ENCODE measurements at regions of chr1 and their contacts with region 1.

Region 1: GRCh38 chr1:223556414-223557129 is 108.9 kb downstream of the CAPN8 start:
- DNase-seq: peak; percentile 59
- ATAC-seq: peak; percentile 88
- H3K4me3 ChIP-seq: no peak overlapping the region
- H3K27ac ChIP-seq: no peak overlapping the region
- H3K4me1 ChIP-seq: peaks cover 3% of the 10 kb centered on the region
- H3K27me3 ChIP-seq: no peaks in the 10 kb centered on the region
- CTCF ChIP-seq: peak; percentile 71 to 85 (median 83)
- EP300 ChIP-seq: peak in 1 of 2 experiments; percentile 79; a peak in 1 of 4 replicates
- POLR2A ChIP-seq: no peak
- RAD21 ChIP-seq: peak; percentile 78

Region 2: GRCh38 chr1:223500560-223501425 is 55.8 kb before region 1 on chr1:
- CTCF ChIA-PET with region 1: no interaction called
- POLR2A ChIA-PET with region 1: no interaction called
- RAD21 ChIA-PET with region 1: no interaction called
- SMC1A ChIA-PET with region 1: no interaction called
- in situ Hi-C with region 1: no loop called
- intact Hi-C with region 1: no loop called
- DNase-seq: no peak
- ATAC-seq: no peak
- H3K4me3 ChIP-seq: no peak overlapping the region
- H3K27ac ChIP-seq: no peak overlapping the region
- H3K4me1 ChIP-seq: no peaks in the 10 kb centered on the region
- H3K27me3 ChIP-seq: no peaks in the 10 kb centered on the region
- CTCF ChIP-seq: no peak
- EP300 ChIP-seq: no peak
- POLR2A ChIP-seq: no peak
- RAD21 ChIP-seq: no peak

Region 3: GRCh38 chr1:223538981-223539380 is 17.6 kb before region 1 on chr1:
- CTCF ChIA-PET with region 1: interaction called, 16 read pairs
- POLR2A ChIA-PET with region 1: interaction called, 12 read pairs
- RAD21 ChIA-PET with region 1: interaction called, 14 read pairs
- SMC1A ChIA-PET with region 1: interaction called, 13 read pairs
- in situ Hi-C with region 1: no loop called
- intact Hi-C with region 1: no loop called
- DNase-seq: no peak
- ATAC-seq: no peak
- H3K4me3 ChIP-seq: no peak overlapping the region
- H3K27ac ChIP-seq: no peak overlapping the region
- H3K4me1 ChIP-seq: no peaks in the 10 kb centered on the region
- H3K27me3 ChIP-seq: peaks cover 0 to 3% of the 10 kb centered on the region in 2 experiments; a peak in 1 of 4 replicates
- CTCF ChIP-seq: no peak
- EP300 ChIP-seq: no peak
- POLR2A ChIP-seq: no peak
- RAD21 ChIP-seq: no peak

Region 4: GRCh38 chr1:223621312-223621734 is 64.8 kb after region 1 on chr1:
- CTCF ChIA-PET with region 1: interaction called, 87 read pairs
- POLR2A ChIA-PET with region 1: interaction called, 5 read pairs
- RAD21 ChIA-PET with region 1: interaction called, 45 read pairs
- SMC1A ChIA-PET with region 1: interaction called, 37 read pairs
- in situ Hi-C with region 1: no loop called
- intact Hi-C with region 1: no loop called
- DNase-seq: peak; percentile 60
- ATAC-seq: peak; percentile 94
- H3K4me3 ChIP-seq: no peak overlapping the region
- H3K27ac ChIP-seq: no peak overlapping the region
- H3K4me1 ChIP-seq: peaks cover 5% of the 10 kb centered on the region; the same call in 1 of the 2 replicates
- H3K27me3 ChIP-seq: 0 out of 4 replicates have a peak, but pooled peaks cover 0 to 3% of the 10 kb centered on the region in 2 experiments
- CTCF ChIP-seq: no peak
- EP300 ChIP-seq: peak in 1 of 2 experiments; percentile 88; a peak in 2 of 4 replicates
- POLR2A ChIP-seq: no peak
- RAD21 ChIP-seq: peak; percentile 2; the same call in 1 of the 2 replicates

Region 5: GRCh38 chr1:223649222-223649621 is 92.7 kb after region 1 on chr1:
- CTCF ChIA-PET with region 1: no interaction called
- POLR2A ChIA-PET with region 1: no interaction called
- RAD21 ChIA-PET with region 1: no interaction called
- SMC1A ChIA-PET with region 1: no interaction called
- in situ Hi-C with region 1: no loop called
- intact Hi-C with region 1: no loop called
- DNase-seq: no peak
- ATAC-seq: no peak
- H3K4me3 ChIP-seq: no peak overlapping the region
- H3K27ac ChIP-seq: no peak overlapping the region
- H3K4me1 ChIP-seq: no peaks in the 10 kb centered on the region
- H3K27me3 ChIP-seq: peaks cover 0 to 3% of the 10 kb centered on the region in 2 experiments; a peak in 3 of 4 replicates
- CTCF ChIP-seq: no peak
- EP300 ChIP-seq: no peak
- POLR2A ChIP-seq: no peak
- RAD21 ChIP-seq: no peak

Region 6: DNA sequence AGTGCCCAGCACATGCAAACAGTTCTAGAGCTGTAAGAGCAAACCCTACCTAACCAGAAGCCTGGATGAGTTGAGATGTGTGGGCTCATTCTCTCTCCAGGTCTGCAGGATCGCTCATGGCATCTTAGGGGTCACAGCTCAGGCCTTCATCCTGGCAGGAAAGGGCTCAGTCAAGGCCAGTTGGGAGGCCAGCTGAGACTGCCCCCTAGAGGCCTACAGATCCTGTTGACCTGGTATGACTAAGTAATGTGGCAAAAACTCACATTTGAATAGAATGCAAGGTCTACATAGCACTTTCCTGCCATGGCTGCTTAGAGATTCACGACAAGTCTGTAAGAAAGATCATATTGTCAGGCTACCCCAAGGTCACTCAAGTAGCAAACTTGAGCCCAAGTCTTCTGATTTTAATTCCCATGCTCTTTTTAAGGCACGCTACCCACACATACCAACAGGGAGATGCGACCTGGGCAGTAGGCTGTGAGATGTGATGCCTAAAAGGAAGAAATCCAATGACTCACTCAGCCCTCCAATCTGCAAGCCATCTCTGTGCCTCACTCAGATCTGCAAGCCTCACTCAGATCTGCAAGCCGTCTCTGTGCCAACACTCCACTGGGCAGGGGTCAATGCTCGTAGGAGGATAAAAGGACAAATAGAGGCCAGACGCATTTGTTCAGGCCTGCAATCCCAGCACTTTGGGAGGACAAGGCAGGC is 114.0 kb after region 1 on chr1:
- CTCF ChIA-PET with region 1: interaction called, 40 read pairs
- POLR2A ChIA-PET with region 1: no interaction called
- RAD21 ChIA-PET with region 1: interaction called, 10 read pairs
- SMC1A ChIA-PET with region 1: interaction called, 12 read pairs
- in situ Hi-C with region 1: no loop called
- intact Hi-C with region 1: no loop called
- DNase-seq: no peak
- ATAC-seq: peak; percentile 88
- H3K4me3 ChIP-seq: no peak overlapping the region
- H3K27ac ChIP-seq: no peak overlapping the region
- H3K4me1 ChIP-seq: no peaks in the 10 kb centered on the region
- H3K27me3 ChIP-seq: 0 out of 4 replicates have a peak, but pooled peaks cover 0 to 2% of the 10 kb centered on the region in 2 experiments
- CTCF ChIP-seq: peak; percentile 49 to 61 (median 50)
- EP300 ChIP-seq: no peak
- POLR2A ChIP-seq: no peak
- RAD21 ChIP-seq: peak; percentile 53

Region 7: DNA sequence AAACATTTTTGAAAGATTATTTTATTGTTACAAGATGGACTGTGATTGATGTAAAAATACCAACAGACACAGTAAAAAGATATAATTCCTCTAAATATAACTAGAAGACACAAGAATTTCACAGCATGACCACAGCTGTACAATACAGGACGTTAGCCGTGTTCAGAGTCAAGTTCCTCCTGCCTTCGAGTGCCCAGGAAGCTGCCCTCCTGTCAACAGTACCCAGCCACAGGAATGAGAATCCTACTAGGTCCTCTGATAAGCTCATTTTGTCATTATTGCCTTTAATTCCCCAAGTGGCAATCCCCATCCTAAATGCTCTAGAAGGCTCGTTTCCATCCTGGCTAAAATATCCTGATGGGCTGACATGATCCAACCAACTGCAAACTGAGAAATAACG is 139.4 kb after region 1 on chr1:
- CTCF ChIA-PET with region 1: interaction called, 32 read pairs
- POLR2A ChIA-PET with region 1: no interaction called
- RAD21 ChIA-PET with region 1: interaction called, 17 read pairs
- SMC1A ChIA-PET with region 1: interaction called, 11 read pairs
- in situ Hi-C with region 1: no loop called
- intact Hi-C with region 1: no loop called
- DNase-seq: no peak
- ATAC-seq: no peak
- H3K4me3 ChIP-seq: no peak overlapping the region
- H3K27ac ChIP-seq: no peak overlapping the region
- H3K4me1 ChIP-seq: peaks cover 3% of the 10 kb centered on the region; the same call in 1 of the 2 replicates
- H3K27me3 ChIP-seq: no peaks in the 10 kb centered on the region
- CTCF ChIP-seq: no peak
- EP300 ChIP-seq: no peak
- POLR2A ChIP-seq: no peak
- RAD21 ChIP-seq: no peak

Measured in GM12878 (cell line).